Common myeloid progenitor, CD34-positive (primary cell): ENCODE measurements at regions of chrX and their contacts with region 1.

Region 1: GRCh38 chrX:39242187-39242586 is 440.9 kb downstream of the MID1IP1 start:
- DNase-seq: peak; percentile 43 to 65 (median 60)
- H3K4me3 ChIP-seq: no peak overlapping the region
- H3K27ac ChIP-seq: no peak overlapping the region
- H3K4me1 ChIP-seq: no peaks in the 10 kb centered on the region
- H3K27me3 ChIP-seq: no peaks in the 10 kb centered on the region

Region 2: GRCh38 chrX:39158801-39159657 is 83.2 kb before region 1 on chrX:
- CTCF ChIA-PET with region 1: interaction called, 13 read pairs
- POLR2A ChIA-PET with region 1: no interaction called
- DNase-seq: peak; percentile 82 to 95 (median 92)
- H3K4me3 ChIP-seq: no peak overlapping the region
- H3K27ac ChIP-seq: no peak overlapping the region
- H3K4me1 ChIP-seq: peaks cover 0 to 20% (median 13%) of the 10 kb centered on the region in 4 experiments
- H3K27me3 ChIP-seq: peaks cover 0 to 33% (median 4%) of the 10 kb centered on the region in 5 experiments

Region 3: GRCh38 chrX:39227371-39227770 is 14.8 kb before region 1 on chrX:
- CTCF ChIA-PET with region 1: interaction called, 13 read pairs
- POLR2A ChIA-PET with region 1: no interaction called
- DNase-seq: peak in 2 of 3 donors; percentile 18 to 35
- H3K4me3 ChIP-seq: no peak overlapping the region
- H3K27ac ChIP-seq: no peak overlapping the region
- H3K4me1 ChIP-seq: peaks cover 0 to 4% (median 4%) of the 10 kb centered on the region in 4 experiments
- H3K27me3 ChIP-seq: peaks cover 0 to 3% (median 0%) of the 10 kb centered on the region in 5 experiments

Region 4: GRCh38 chrX:39384996-39385395 is 142.8 kb after region 1 on chrX:
- CTCF ChIA-PET with region 1: no interaction called
- POLR2A ChIA-PET with region 1: no interaction called
- DNase-seq: no peak
- H3K4me3 ChIP-seq: no peak overlapping the region
- H3K27ac ChIP-seq: no peak overlapping the region
- H3K4me1 ChIP-seq: no peaks in the 10 kb centered on the region
- H3K27me3 ChIP-seq: peaks cover 0 to 4% (median 0%) of the 10 kb centered on the region in 5 experiments